ENCODE measurements at regions of chr9 and their contacts with region 1.

Region 1: GRCh38 chr9:34591248-34591916 is 1.9 kb upstream of the CNTFR start:
- DNase-seq: no peak
- ATAC-seq: peak; percentile 97
- H3K4me3 ChIP-seq: no peak overlapping the region
- H3K27ac ChIP-seq: no peak overlapping the region
- H3K4me1 ChIP-seq: peaks cover 2% of the 10 kb centered on the region; the same call in 1 of the 2 replicates
- H3K27me3 ChIP-seq: peaks cover 28 to 50% of the 10 kb centered on the region in 2 experiments
- CTCF ChIP-seq: peak; percentile 75 to 94 (median 87)
- EP300 ChIP-seq: no peak
- POLR2A ChIP-seq: no peak
- RAD21 ChIP-seq: peak; percentile 66

Region 2: DNA sequence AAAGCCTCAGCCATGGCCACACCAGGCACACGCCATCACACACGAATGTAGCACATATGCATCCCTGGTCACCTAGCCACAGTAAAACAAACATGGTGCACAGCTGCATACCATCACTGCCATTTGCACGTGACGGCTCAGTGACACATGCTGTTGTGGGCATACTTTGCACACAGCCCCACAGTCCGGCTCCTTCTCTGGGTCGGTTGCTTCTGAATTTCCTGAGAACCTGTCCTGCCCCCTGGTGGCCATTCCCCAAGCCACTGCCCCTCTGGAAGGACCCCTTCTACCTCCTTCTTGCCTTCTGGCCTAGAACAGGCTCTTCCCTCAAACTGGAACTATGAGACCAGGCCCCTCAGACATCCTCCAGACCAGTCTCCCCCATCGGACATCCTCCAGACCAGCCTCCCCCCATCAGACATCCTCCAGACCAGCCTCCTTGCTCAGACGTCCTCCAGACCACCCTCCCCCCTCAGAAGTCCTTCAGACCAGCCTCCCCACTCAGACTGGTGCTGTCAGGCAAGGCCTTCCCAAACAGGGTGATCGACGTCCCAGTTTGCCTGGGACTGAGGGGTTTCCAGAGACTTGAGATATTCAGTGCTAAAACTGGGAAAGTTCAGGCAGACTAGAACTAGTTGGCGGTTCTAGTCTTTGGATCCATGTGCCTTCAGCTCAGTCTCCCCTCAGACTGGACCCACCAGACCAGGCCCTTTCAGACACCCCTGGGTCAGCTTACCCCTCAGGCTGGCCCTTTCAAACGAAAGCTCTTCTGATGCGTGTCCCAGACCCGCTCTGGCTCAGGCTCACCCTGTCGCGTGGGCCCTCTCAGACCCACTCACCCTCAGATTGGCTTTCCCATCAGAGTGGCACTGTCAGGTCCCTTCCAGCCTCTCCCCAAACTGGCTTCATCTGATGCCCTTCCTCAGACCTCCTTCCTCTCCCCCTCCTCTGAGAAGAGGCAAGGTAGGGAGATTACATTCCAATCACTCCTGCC is 44.3 kb before region 1 on chr9:
- CTCF ChIA-PET with region 1: interaction called, 4 read pairs
- POLR2A ChIA-PET with region 1: interaction called, 3 read pairs
- RAD21 ChIA-PET with region 1: no interaction called
- SMC1A ChIA-PET with region 1: interaction called, 4 read pairs
- in situ Hi-C with region 1: no loop called
- intact Hi-C with region 1: loop called (anchors 1 kb)
- DNase-seq: no peak
- ATAC-seq: peak; percentile 85
- H3K4me3 ChIP-seq: no peak overlapping the region
- H3K27ac ChIP-seq: no peak overlapping the region
- H3K4me1 ChIP-seq: no peaks in the 10 kb centered on the region
- H3K27me3 ChIP-seq: peaks cover 3 to 8% of the 10 kb centered on the region in 2 experiments
- CTCF ChIP-seq: peak; percentile 48 to 73 (median 70)
- EP300 ChIP-seq: no peak
- POLR2A ChIP-seq: no peak
- RAD21 ChIP-seq: peak; percentile 36

Region 3: DNA sequence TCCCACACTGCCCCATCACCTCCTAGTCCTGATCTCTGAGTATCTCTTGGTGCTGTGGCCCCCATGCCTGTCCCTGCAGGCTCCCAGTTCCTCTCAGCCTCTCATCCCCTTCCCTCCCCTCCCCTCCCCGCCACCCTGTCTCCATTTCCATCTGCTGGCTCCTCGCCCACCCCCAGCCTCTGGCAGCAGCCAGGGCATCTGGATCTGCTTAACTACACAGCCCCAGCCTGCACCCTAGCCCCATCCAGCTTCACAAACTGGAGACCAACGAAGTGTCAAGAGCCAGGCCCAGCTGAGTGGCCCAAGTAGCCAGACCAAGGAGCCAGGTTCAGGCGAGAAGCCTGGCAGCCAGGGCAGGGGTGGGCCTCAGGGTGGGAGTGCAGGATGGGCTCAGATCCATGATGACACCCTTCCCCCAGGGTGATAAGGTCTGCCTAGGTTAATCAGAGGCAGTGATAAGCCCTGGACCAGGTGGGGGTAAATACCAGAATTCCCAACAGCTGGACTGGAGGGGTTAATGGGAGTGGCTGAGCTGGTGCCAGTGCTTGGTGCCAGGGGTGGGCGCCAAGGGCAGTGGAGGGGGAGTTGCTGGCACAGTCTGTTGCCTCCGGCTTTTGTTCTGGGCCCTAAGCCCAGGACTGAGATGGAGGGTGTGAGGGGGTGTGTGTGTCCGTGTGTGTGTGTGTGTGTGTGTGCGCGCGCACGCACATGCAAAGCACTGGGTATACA is 63.1 kb after region 1 on chr9:
- CTCF ChIA-PET with region 1: no interaction called
- POLR2A ChIA-PET with region 1: no interaction called
- RAD21 ChIA-PET with region 1: no interaction called
- SMC1A ChIA-PET with region 1: no interaction called
- in situ Hi-C with region 1: no loop called
- intact Hi-C with region 1: no loop called
- DNase-seq: no peak
- ATAC-seq: no peak
- H3K4me3 ChIP-seq: no peak overlapping the region
- H3K27ac ChIP-seq: no peak overlapping the region
- H3K4me1 ChIP-seq: peaks cover 5% of the 10 kb centered on the region
- H3K27me3 ChIP-seq: no peaks in the 10 kb centered on the region
- CTCF ChIP-seq: no peak
- EP300 ChIP-seq: no peak
- POLR2A ChIP-seq: no peak
- RAD21 ChIP-seq: no peak